Activated T-helper 1 cell treated with anti-CD3 and anti-CD28 coated beads, Interleukin-12 subunit alpha, Interleukin-12 subunit beta, Interleukin-2, Interleukin-4 antibody, amounts not matched to agents 30 ng/mL and 10 ng/mL and 1 ng/mL, durations not matched to agents 14 hours and 24 hours and 36 hours (primary cell): ENCODE measurements at regions of chr7 and their contacts with region 1.

Region 1: DNA sequence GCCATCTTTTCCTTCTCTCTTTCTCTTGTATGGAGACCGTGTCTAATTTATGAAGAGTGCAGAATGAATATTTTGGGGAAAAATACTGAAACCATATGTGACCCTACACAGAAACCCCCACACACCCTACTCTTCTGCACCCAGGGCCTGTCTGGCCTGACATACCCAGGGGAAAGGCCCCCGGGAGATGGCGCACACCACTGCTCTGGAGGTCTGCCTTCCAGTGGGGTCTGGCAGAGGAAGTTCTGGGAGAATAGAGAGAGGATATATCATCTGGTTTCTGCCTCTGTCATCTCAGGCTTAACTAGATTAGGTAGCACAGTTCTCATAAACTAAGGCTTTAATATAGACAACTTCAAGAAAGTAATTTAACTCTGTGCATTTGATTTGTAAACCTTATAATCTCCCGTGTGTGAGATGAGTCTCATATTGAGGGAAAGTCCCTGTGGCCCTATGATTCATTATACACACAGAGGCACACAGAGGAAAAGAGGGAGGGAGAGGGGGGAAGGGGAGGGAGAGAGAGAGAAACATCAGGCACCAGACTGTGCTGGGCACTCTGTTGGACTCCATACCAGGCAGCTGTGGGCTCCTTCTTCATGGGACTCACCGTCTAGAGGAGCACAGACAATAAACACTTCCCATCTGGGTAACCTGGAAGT is 123.3 kb downstream of the AOAH start:
- DNase-seq: peak; percentile 14
- H3K4me3 Mint-ChIP-seq: no peak overlapping the region
- H3K27ac Mint-ChIP-seq: peak overlapping the region; percentile 54
- H3K4me1 Mint-ChIP-seq: peaks cover 70% of the 10 kb centered on the region
- H3K27me3 Mint-ChIP-seq: no peaks in the 10 kb centered on the region

Region 2: DNA sequence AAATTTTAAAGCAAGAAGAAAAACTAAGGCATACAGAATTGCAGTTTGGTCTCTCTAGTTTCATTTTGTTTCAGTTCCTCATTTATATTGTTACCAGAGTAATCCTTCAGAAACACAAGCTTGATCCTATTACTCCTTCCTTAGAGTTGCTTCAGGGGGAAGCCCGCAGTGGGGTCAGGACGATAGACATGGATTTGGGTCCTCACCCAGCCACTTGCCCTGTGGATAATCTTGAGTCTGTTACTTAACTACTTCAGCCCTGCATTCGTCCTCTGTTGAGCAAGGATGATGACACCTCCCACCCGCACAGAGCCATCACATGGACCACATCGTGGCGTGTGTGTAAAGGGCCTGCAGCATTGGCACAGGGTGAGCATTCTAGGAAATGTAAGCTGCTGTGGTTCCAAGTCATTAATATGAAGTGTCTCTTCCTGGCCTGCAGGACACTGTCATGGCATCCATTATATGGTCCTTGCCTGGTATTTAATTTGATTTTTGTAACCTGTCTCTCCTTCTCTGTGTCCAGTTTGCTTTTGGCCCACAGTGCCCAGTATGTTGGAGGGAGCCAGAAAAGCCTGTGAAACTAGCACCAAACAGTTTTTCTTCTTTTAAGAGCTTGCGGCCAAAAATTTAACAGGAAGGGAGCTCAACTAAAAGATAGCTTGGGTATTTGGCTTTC is 336.7 kb before region 1 on chr7:
- intact Hi-C with region 1: no loop called
- DNase-seq: no peak
- H3K4me3 Mint-ChIP-seq: no peak overlapping the region
- H3K27ac Mint-ChIP-seq: no peak overlapping the region
- H3K4me1 Mint-ChIP-seq: peaks cover 6% of the 10 kb centered on the region
- H3K27me3 Mint-ChIP-seq: peaks cover 5% of the 10 kb centered on the region

Region 3: GRCh38 chr7:36526863-36527548 is 74.0 kb before region 1 on chr7:
- intact Hi-C with region 1: loop called (anchors 2 kb)
- DNase-seq: no peak
- H3K4me3 Mint-ChIP-seq: no peak overlapping the region
- H3K27ac Mint-ChIP-seq: peak overlapping the region; percentile 58
- H3K4me1 Mint-ChIP-seq: peaks cover 20% of the 10 kb centered on the region
- H3K27me3 Mint-ChIP-seq: peaks cover 2% of the 10 kb centered on the region

Region 4: DNA sequence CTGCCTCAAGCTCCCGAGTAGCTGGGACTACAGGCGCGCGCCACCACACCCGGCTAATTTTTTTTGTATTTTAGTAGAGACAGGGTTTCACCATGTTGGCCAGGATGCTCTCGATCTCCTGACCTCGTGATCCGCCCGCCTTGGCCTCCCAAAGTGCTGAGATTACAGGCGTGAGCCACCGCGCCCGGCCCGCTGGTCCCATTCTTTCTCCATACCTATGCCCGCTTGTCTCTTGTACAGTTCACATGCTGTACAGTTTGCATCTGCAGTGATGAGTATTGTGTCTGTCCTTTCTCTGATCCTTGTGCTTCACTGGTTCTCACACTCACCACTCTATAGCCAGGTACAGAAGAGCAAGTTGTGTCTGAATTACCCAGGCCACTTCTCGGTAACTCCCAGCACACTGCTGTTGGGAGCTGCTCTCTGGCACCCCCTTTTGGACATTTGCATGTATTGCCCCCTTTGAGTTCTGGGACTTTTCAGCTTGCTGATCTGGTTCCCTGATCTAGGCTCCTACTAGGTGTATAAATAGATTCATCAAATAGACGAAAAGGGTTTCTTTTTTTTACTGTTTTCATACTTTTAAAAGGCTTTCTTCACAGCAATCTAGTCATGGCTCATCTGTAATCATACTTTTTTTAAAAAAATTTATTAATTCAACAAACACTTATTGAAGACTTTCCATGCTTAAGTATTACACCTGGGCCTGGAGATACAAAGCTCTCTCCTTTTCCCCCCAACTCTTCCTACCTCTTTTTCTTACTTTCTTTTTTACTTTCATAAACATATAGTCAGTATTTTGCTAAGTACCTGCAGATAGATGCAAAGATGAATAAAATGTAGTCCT is 69.8 kb after region 1 on chr7:
- intact Hi-C with region 1: loop called (anchors 2 kb)
- DNase-seq: peak; percentile 54
- H3K4me3 Mint-ChIP-seq: no peak overlapping the region
- H3K27ac Mint-ChIP-seq: no peak overlapping the region
- H3K4me1 Mint-ChIP-seq: peaks cover 55% of the 10 kb centered on the region
- H3K27me3 Mint-ChIP-seq: no peaks in the 10 kb centered on the region

Region 5: GRCh38 chr7:37065779-37066271 is 464.8 kb after region 1 on chr7:
- intact Hi-C with region 1: loop called (anchors 1 kb)
- DNase-seq: no peak
- H3K4me3 Mint-ChIP-seq: peak overlapping the region; percentile 16
- H3K27ac Mint-ChIP-seq: peak overlapping the region; percentile 88
- H3K4me1 Mint-ChIP-seq: peaks cover 48% of the 10 kb centered on the region
- H3K27me3 Mint-ChIP-seq: no peaks in the 10 kb centered on the region